Endothelial cell of umbilical vein (primary cell): ENCODE measurements at regions of chr5 and their contacts with region 1.

Region 1: GRCh38 chr5:132073231-132074013 is at the start of gene CSF2:
- DNase-seq: peak; percentile 55
- H3K4me3 ChIP-seq: no peak within 1 kb of the TSS
- H3K27ac ChIP-seq: no peak within 1 kb of the TSS
- H3K4me1 ChIP-seq: peaks cover 26% of the 10 kb centered on the region
- H3K27me3 ChIP-seq: no peaks in the 10 kb centered on the region
- CTCF ChIP-seq: no peak
- POLR2A ChIP-seq: no peak
- total RNA-seq, gene CSF2: not detected in 2 replicates

Region 2: DNA sequence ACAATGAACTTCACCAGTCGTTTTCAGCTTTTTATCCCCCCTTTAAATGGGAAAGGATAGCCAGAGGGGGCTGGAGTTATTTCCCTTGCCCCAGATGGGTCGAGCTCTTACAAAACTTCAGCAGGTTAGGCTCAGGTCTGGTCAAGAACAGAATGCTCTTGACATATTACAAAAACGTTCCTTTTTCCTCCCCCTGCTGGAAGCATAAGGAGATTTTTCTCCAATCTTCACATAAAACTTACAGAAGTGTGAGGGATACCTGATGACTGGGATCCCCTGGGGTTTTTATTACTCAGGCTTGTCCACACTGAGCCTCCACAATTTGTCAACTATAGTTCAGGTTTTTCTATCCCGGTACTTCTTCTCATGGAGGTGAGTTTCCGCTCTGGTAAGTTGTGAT is 61.0 kb after region 1 on chr5:
- CTCF ChIA-PET with region 1: interaction called, 12 read pairs
- POLR2A ChIA-PET with region 1: no interaction called
- dilution Hi-C with region 1: no loop called
- intact Hi-C with region 1: no loop called
- DNase-seq: peak; percentile 36
- H3K4me3 ChIP-seq: no peak overlapping the region
- H3K27ac ChIP-seq: no peak overlapping the region
- H3K4me1 ChIP-seq: no peaks in the 10 kb centered on the region
- H3K27me3 ChIP-seq: peaks cover 4 to 10% of the 10 kb centered on the region in 2 experiments
- CTCF ChIP-seq: peak; percentile 26 to 36
- POLR2A ChIP-seq: no peak